Naive thymus-derived CD4-positive, alpha-beta T cell (primary cell): ENCODE measurements at regions of chr1 and their contacts with region 1.

Region 1: DNA sequence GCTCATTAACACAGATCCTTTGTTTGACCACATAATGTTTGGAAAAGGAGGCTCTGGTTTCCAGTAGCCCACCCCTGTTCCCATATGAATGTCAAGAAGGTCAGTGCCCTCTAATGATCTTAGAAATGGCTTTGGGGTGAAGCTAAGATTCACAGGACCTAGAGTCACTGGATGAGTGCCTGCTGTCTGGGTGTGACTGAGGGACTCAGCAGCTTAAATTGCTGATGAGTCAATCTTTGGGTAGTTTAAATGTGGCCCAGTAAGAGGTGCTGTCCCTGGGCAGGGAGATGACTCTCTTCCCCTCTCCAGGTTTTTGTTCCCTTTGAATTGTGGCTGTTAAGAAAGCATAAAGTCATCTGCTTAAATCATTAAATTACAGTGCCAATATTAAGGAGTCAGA is 50.6 kb downstream of the L1TD1 start:
- DNase-seq: no peak
- ATAC-seq: no peak
- H3K4me3 ChIP-seq: no peak overlapping the region
- H3K4me3 Mint-ChIP-seq: no peak overlapping the region
- H3K27ac ChIP-seq: no peak overlapping the region
- H3K27ac Mint-ChIP-seq: no peak overlapping the region
- H3K4me1 ChIP-seq: no peaks in the 10 kb centered on the region
- H3K4me1 Mint-ChIP-seq: no peaks in the 10 kb centered on the region
- H3K27me3 ChIP-seq: no peaks in the 10 kb centered on the region
- H3K27me3 Mint-ChIP-seq: no peaks in the 10 kb centered on the region

Region 2: DNA sequence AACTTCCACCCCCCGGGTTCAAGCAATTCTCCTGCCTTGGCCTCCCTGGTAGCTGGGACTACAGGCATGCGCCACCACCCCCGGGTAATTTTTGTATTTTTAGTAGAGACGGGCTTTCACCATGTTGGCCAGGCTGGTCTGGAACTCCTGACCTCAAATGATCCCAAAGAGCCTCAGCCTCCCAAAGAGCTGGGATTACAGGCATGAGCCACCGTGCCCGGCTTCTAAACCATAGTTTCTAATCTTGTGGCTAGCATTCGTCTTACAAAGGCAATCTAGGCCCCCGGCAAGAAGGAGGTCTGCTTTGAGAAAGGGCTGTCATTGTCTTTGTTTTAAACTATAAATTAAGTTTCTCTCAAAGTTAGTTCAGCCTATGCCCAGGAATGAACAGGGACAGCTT is 60.9 kb before region 1 on chr1:
- CTCF ChIA-PET with region 1: interaction called, 10 read pairs
- POLR2A ChIA-PET with region 1: no interaction called
- intact Hi-C with region 1: no loop called
- DNase-seq: no peak
- ATAC-seq: no peak
- H3K4me3 ChIP-seq: no peak overlapping the region
- H3K4me3 Mint-ChIP-seq: no peak overlapping the region
- H3K27ac ChIP-seq: no peak overlapping the region
- H3K27ac Mint-ChIP-seq: no peak overlapping the region
- H3K4me1 ChIP-seq: no peaks in the 10 kb centered on the region
- H3K4me1 Mint-ChIP-seq: no peaks in the 10 kb centered on the region
- H3K27me3 ChIP-seq: no peaks in the 10 kb centered on the region
- H3K27me3 Mint-ChIP-seq: peaks cover 0 to 2% (median 0%) of the 10 kb centered on the region in 5 donors

Region 3: DNA sequence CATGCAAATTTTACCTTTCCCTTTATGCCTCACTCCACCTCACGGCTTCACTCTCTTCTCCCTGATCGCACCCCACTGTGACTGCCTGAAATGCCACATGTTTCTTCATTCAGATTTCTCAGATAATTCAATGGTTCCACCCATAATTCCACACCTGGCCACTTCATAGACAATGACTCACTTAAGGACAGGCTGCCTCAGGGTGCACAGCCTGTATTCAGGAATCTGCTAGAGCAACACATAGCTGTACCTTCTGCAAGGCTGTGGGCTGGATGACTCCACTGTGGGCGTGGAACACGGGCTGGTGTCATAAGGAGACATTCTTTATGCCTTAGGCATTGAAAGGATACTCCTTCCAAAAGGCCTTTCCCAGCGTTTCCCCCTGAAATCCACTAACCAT is 14.5 kb before region 1 on chr1:
- CTCF ChIA-PET with region 1: no interaction called
- POLR2A ChIA-PET with region 1: no interaction called
- intact Hi-C with region 1: no loop called
- DNase-seq: no peak
- ATAC-seq: no peak
- H3K4me3 ChIP-seq: no peak overlapping the region
- H3K4me3 Mint-ChIP-seq: no peak overlapping the region
- H3K27ac ChIP-seq: no peak overlapping the region
- H3K27ac Mint-ChIP-seq: no peak overlapping the region
- H3K4me1 ChIP-seq: no peaks in the 10 kb centered on the region
- H3K4me1 Mint-ChIP-seq: peaks cover 0 to 6% (median 0%) of the 10 kb centered on the region in 7 donors
- H3K27me3 ChIP-seq: no peaks in the 10 kb centered on the region
- H3K27me3 Mint-ChIP-seq: peaks cover 0 to 5% (median 0%) of the 10 kb centered on the region in 5 donors